Naive thymus-derived CD4-positive, alpha-beta T cell (primary cell): ENCODE measurements at regions of chr3 and their contacts with region 1.

Region 1: DNA sequence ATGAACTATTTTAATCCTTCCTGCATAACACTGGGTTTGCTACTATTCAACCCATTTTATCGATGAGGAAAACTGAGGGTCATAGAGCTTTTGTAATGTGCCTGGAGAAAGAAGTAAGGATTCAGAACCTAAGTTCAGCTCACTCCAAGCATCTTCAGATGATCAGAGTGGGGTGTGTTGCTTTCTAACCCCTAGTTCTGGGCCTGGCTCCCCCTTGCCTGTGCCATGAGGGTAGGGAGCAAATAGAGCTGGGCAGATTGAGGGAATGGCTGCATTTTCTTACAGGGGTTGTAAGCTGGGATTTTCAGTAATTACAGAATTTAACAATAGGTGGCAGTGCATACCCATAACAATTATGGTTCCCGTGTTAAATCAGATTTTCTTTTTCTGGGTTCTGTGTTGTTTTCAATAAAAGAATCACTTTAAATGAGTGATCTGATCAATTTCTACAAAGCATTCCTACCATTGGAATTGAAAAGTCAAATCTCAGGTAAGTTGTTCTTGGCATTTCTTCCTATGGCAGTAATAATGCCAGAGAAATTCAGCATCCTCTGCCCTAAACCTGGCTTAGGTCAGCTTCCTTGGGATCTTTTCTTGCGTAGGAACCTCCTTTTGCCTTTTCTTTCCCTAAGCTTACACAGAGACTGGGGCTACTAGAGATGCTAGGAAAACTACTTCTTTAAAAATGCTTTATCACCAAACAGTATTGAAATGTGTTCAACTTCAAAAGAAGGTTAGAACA is 103.8 kb upstream of the IL12A start:
- DNase-seq: peak in 3 of 9 donors; percentile 3 to 16 (median 9)
- ATAC-seq: peak; percentile 57
- H3K4me3 ChIP-seq: no peak overlapping the region
- H3K4me3 Mint-ChIP-seq: no peak overlapping the region
- H3K27ac ChIP-seq: no peak overlapping the region
- H3K27ac Mint-ChIP-seq: no peak overlapping the region
- H3K4me1 ChIP-seq: no peaks in the 10 kb centered on the region
- H3K4me1 Mint-ChIP-seq: no peaks in the 10 kb centered on the region
- H3K27me3 ChIP-seq: no peaks in the 10 kb centered on the region
- H3K27me3 Mint-ChIP-seq: peaks cover 0 to 24% (median 15%) of the 10 kb centered on the region in 5 donors

Region 2: GRCh38 chr3:159988617-159989271 is 103.9 kb after region 1 on chr3 and contains the start of gene IL12A:
- CTCF ChIA-PET with region 1: no interaction called
- POLR2A ChIA-PET with region 1: no interaction called
- intact Hi-C with region 1: loop called in 1 of 2 experiments (anchors 5 kb)
- DNase-seq: peak; percentile 59 to 85 (median 75)
- ATAC-seq: peak; percentile 98
- H3K4me3 ChIP-seq: peak within 1 kb of the TSS; percentile 56
- H3K4me3 Mint-ChIP-seq: peak within 1 kb of the TSS; percentile 82 to 89 (median 84)
- H3K27ac ChIP-seq: peak within 1 kb of the TSS; percentile 32
- H3K27ac Mint-ChIP-seq: peak within 1 kb of the TSS in 5 of 9 donors; percentile 58 to 65 (median 62)
- H3K4me1 ChIP-seq: peaks cover 6 to 9% of the 10 kb centered on the region in 2 donors
- H3K4me1 Mint-ChIP-seq: peaks cover 6 to 33% (median 15%) of the 10 kb centered on the region in 7 donors
- H3K27me3 ChIP-seq: no peaks in the 10 kb centered on the region
- H3K27me3 Mint-ChIP-seq: peaks cover 0 to 24% (median 10%) of the 10 kb centered on the region in 5 donors
- total RNA-seq, gene IL12A: 0.40 to 1.8 (median 1.3) TPM